ENCODE measurements at regions of chr6 and their contacts with region 1.

Region 1: DNA sequence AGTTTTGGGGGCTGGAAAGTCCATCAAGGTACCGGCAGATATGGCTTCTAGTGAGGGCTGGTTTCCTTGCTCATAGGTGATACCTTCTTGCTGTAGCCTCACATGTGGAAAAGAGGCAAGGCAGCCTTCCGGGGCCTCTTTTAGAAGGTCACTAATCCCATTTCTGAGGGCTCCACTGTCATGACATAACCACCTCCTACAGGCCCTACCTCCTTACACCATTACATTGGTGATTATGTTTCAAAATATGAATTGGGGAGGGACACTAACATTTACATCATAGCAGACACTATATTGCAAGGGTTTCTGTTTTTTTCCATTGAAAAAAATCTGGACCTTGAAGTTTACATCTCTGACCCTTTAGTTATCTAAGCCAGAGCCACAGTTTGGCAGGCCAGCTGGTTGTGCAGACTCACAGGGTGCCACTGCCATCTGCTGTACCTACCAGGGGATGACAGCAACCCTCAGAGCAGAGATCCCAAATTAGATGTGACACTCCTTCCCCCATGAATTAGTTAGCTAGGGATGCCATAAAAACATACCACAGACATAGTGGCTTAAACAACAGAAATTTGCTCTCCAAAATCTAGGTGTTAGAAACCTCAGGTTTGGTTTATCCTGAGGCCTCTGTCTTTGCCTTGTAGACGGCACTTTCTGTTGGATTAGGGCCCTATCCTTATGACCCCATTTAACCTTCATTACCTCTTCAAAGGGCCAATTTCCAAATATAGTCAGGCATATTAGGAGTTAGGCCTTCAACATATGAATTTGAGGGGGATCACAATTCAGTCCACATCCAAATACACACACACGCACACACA is 166.4 kb upstream of the RNF217 start:
- DNase-seq: no peak
- H3K4me3 ChIP-seq: no peak overlapping the region
- H3K27ac ChIP-seq: no peak overlapping the region
- H3K4me1 ChIP-seq: peaks cover 7% of the 10 kb centered on the region
- H3K27me3 ChIP-seq: peaks cover 2% of the 10 kb centered on the region
- CTCF ChIP-seq: peak; percentile 58 to 75

Region 2: DNA sequence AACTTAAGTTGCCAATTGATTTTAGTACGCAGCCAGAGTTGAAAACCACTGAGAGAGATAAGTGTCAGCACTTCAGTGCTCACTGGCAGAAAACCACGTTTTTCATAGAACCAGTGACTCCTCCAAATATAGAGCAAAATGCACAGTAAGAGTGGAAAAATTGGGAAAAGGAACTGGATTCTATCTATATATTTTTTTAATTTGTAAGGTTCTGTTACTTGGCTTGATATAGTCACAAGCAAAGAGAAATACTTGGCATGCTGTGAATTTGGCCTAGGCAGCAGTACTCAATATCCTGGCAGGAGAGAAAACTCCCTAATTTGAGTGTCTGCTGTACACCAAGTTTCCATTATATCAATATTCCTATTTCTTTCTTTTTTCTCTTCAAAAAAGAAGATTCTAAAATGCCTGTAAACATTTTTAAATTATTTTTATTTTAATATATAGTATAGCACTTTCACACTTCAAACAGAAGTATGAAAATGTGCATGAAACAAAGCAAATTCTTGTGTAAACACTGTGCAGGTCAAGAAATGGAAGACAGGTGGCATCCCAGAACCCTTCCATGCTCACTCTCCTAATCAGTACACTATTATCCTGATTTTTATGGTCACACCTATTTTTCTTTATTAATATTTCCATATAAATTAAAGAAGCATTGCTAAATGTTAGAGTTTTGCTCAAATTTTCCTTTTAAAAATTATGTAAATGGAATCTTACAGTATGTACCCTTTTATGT is 395.4 kb before region 1 on chr6:
- CTCF ChIA-PET with region 1: no interaction called
- dilution Hi-C with region 1: no loop called
- in situ Hi-C with region 1: no loop called
- intact Hi-C with region 1: loop called (anchors 1 kb)
- DNase-seq: no peak
- H3K4me3 ChIP-seq: no peak overlapping the region
- H3K27ac ChIP-seq: no peak overlapping the region
- H3K4me1 ChIP-seq: no peaks in the 10 kb centered on the region
- H3K27me3 ChIP-seq: no peaks in the 10 kb centered on the region
- CTCF ChIP-seq: peak; percentile 14 to 55

Region 3: DNA sequence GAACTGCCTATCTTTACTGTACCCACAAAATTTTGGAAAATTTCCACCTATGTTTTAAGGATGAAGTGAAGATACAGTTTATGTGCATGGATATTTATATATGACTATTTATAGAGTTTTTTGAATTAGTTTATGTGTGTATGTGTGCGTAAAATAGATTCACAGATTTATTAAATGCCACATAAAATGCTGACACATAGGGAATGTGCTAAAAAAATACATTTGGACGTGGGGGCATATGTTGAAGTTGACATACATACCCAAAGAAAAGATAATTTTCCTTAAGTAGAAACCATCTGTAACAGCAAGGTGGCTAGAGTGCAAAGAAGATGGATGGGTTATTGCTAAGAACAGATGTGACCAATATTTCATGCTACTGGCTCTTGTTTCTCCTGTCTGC is 135.7 kb before region 1 on chr6:
- CTCF ChIA-PET with region 1: no interaction called
- dilution Hi-C with region 1: no loop called
- in situ Hi-C with region 1: no loop called
- intact Hi-C with region 1: loop called (anchors 1 kb)
- DNase-seq: no peak
- H3K4me3 ChIP-seq: no peak overlapping the region
- H3K27ac ChIP-seq: no peak overlapping the region
- H3K4me1 ChIP-seq: no peaks in the 10 kb centered on the region
- H3K27me3 ChIP-seq: peaks cover 8% of the 10 kb centered on the region
- CTCF ChIP-seq: no peak

Region 4: GRCh38 chr6:125834348-125834747 is 1038.5 kb after region 1 on chr6:
- CTCF ChIA-PET with region 1: no interaction called
- dilution Hi-C with region 1: no loop called
- in situ Hi-C with region 1: no loop called
- intact Hi-C with region 1: no loop called
- DNase-seq: no peak
- H3K4me3 ChIP-seq: no peak overlapping the region
- H3K27ac ChIP-seq: no peak overlapping the region
- H3K4me1 ChIP-seq: no peaks in the 10 kb centered on the region
- H3K27me3 ChIP-seq: no peaks in the 10 kb centered on the region
- CTCF ChIP-seq: no peak

Measured in mammary epithelial cell (primary cell).